ENCODE measurements at regions of chr1 and their contacts with region 1.

Region 1: DNA sequence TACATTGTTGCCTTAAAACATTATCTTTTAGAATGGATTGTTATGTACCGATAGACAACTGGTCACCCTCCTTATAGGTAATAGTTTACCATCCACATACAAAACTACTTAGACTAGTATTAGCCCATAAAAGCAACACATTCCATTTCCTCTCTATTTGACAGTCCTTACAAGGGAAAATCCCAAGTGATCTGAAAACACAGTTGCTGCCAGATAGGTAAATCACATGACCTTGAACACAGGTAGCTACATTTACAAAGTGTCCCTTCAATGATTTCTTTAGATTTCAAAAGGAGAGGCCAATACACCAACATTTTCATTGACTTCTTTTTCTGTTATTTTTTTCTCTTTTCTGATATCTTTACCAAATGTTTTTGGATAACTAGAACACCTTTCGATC is 102.9 kb upstream of the SMYD2 start:
- DNase-seq: no peak
- H3K4me3 ChIP-seq: no peak overlapping the region
- H3K27ac ChIP-seq: no peak overlapping the region
- H3K4me1 ChIP-seq: no peaks in the 10 kb centered on the region
- H3K27me3 ChIP-seq: no peaks in the 10 kb centered on the region
- CTCF ChIP-seq: no peak
- EP300 ChIP-seq: no peak
- RAD21 ChIP-seq: no peak

Region 2: GRCh38 chr1:214037468-214037867 is 140.6 kb before region 1 on chr1:
- CTCF ChIA-PET with region 1: no interaction called
- POLR2A ChIA-PET with region 1: no interaction called
- DNase-seq: no peak
- H3K4me3 ChIP-seq: no peak overlapping the region
- H3K27ac ChIP-seq: no peak overlapping the region
- H3K4me1 ChIP-seq: peaks cover 0 to 2% of the 10 kb centered on the region in 2 experiments; a peak in 2 of 4 replicates
- H3K27me3 ChIP-seq: no peaks in the 10 kb centered on the region
- CTCF ChIP-seq: no peak
- EP300 ChIP-seq: no peak
- RAD21 ChIP-seq: no peak

Region 3: DNA sequence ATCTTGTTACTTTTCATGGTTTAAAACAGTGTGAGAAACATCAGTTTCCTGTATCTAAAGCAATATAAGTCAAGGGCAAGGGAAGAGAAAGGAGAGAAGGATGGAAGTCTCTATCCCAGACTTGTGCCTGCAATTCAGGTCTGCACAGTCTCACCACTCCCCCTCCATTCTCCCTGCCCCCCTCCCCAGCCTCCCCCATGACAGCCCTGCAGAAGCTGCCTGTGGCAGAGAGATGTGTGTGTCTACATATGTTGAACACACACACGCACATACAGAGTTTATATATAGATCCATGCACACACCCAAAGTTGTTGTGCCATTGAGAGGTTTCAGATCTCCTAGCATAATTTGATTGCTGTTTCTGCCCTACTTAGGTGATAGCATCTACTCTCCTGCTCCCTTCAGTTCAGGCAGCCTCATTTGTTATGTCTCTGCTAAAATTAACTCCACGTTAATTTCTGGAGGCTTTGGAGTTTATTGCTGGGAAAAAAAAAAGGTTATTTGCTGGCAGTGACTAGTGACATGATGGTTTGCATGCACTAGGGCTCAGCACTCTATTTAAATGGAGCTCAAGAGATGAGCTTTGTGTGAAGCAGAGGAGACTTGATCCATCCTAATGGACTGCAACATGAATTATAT is 22.0 kb before region 1 on chr1:
- CTCF ChIA-PET with region 1: interaction called, 10 read pairs
- POLR2A ChIA-PET with region 1: no interaction called
- DNase-seq: peak; percentile 60
- H3K4me3 ChIP-seq: no peak overlapping the region
- H3K27ac ChIP-seq: peak overlapping the region in 1 of 2 experiments; percentile 95; a peak in 2 of 4 replicates
- H3K4me1 ChIP-seq: peaks cover 0 to 34% of the 10 kb centered on the region in 2 experiments; a peak in 2 of 4 replicates
- H3K27me3 ChIP-seq: no peaks in the 10 kb centered on the region
- CTCF ChIP-seq: no peak
- EP300 ChIP-seq: peak in 1 of 2 experiments; percentile 95; a peak in 2 of 4 replicates
- RAD21 ChIP-seq: no peak; the same call in 1 of the 2 replicates